Endothelial cell of umbilical vein (primary cell): ENCODE measurements at regions of chr17 and their contacts with region 1.

Region 1: GRCh38 chr17:39653662-39654331 is 11.4 kb upstream of the TCAP start:
- DNase-seq: peak; percentile 35
- H3K4me3 ChIP-seq: no peak overlapping the region
- H3K27ac ChIP-seq: no peak overlapping the region
- H3K4me1 ChIP-seq: peaks cover 1% of the 10 kb centered on the region
- H3K27me3 ChIP-seq: no peaks in the 10 kb centered on the region
- CTCF ChIP-seq: peak; percentile 93 to 96
- POLR2A ChIP-seq: no peak

Region 2: GRCh38 chr17:39612291-39612894 is 41.4 kb before region 1 on chr17:
- CTCF ChIA-PET with region 1: no interaction called
- POLR2A ChIA-PET with region 1: no interaction called
- dilution Hi-C with region 1: no loop called
- intact Hi-C with region 1: no loop called
- DNase-seq: no peak
- H3K4me3 ChIP-seq: no peak overlapping the region
- H3K27ac ChIP-seq: no peak overlapping the region
- H3K4me1 ChIP-seq: peaks cover 3% of the 10 kb centered on the region
- H3K27me3 ChIP-seq: peaks cover 24 to 29% of the 10 kb centered on the region in 2 experiments
- CTCF ChIP-seq: no peak
- POLR2A ChIP-seq: no peak

Region 3: DNA sequence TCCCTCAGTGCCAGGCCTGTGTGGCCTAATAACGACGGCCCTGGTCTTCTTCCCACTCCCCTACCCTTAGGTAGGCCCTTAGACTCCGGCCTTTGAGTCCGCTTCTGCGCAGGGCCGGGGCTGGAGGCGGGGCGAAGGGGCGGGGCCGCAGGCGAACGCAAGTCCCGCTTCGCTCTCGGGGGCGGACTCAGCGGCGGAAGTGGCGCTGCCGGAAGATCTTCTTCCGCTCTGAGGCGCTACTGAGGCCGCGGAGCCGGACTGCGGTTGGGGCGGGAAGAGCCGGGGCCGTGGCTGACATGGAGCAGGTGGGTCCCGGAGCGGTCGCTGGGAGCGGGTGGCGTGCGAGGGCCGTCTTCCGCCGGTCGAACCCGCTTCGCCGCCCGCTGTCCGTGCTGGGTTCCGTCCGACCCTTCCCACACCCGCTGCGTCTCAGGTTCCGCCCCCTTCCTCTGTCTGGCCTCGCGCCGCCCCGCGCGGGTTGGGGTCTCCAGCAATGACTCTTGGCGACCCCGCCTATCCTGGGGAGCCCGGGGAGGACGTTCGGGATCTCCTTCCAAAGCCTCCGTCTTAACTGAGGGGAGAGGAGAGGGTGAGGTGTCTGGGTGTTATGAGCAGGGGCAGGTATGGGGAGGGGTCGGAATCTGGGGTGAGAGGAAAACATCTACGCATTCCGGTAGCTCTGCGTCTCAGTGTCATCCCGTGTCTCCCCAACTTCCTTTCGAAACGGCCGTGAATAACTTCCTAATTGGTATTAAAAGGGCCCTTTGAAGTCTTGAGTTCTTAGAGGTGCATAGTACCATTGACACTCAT is 16.7 kb before region 1 on chr17 and contains the start of gene STARD3:
- CTCF ChIA-PET with region 1: interaction called, 63 read pairs
- POLR2A ChIA-PET with region 1: no interaction called
- dilution Hi-C with region 1: no loop called
- intact Hi-C with region 1: loop called (anchors 1 kb)
- DNase-seq: peak; percentile 88
- H3K4me3 ChIP-seq: peak within 1 kb of the TSS; percentile 90 to 96 (median 91)
- H3K27ac ChIP-seq: peak within 1 kb of the TSS; percentile 75
- H3K4me1 ChIP-seq: peaks cover 14% of the 10 kb centered on the region
- H3K27me3 ChIP-seq: peaks cover 0 to 3% of the 10 kb centered on the region in 2 experiments
- CTCF ChIP-seq: peak in 1 of 2 donors; percentile 5
- POLR2A ChIP-seq: peak; percentile 61
- total RNA-seq, gene STARD3: 48.9 and 51.0 TPM in 2 replicates

Region 4: DNA sequence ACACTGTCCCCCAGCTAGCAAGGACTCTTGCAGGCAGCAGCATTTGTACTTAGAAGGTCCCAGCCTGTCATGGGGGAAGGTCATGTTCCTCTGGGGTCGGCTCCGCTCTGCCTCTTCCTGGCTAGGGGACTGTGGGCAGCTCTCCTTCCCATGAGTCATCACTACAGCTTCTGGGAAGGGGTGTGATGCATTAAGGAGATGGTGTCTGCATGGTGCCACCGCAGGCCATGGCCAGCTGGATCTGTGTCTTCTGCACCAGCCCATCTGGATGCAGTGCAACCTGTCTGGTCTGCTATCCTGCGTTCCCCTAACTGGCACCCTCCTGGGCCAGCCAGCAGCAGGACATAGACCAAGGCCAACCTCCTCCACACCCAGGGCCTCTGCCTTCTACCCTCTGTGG is 10.5 kb before region 1 on chr17:
- CTCF ChIA-PET with region 1: interaction called, 48 read pairs
- POLR2A ChIA-PET with region 1: no interaction called
- dilution Hi-C with region 1: no loop called
- intact Hi-C with region 1: no loop called
- DNase-seq: peak; percentile 28
- H3K4me3 ChIP-seq: no peak overlapping the region
- H3K27ac ChIP-seq: no peak overlapping the region
- H3K4me1 ChIP-seq: peaks cover 11% of the 10 kb centered on the region
- H3K27me3 ChIP-seq: no peaks in the 10 kb centered on the region
- CTCF ChIP-seq: no peak
- POLR2A ChIP-seq: no peak

Region 5: GRCh38 chr17:39668199-39668966 is 14.6 kb after region 1 on chr17 and contains the start of gene PNMT:
- CTCF ChIA-PET with region 1: interaction called, 72 read pairs
- POLR2A ChIA-PET with region 1: no interaction called
- dilution Hi-C with region 1: no loop called
- intact Hi-C with region 1: no loop called
- DNase-seq: peak; percentile 48
- H3K4me3 ChIP-seq: peak within 1 kb of the TSS in 1 of 3 experiments; percentile 3
- H3K27ac ChIP-seq: no peak within 1 kb of the TSS
- H3K4me1 ChIP-seq: no peaks in the 10 kb centered on the region
- H3K27me3 ChIP-seq: peaks cover 6 to 10% of the 10 kb centered on the region in 2 experiments
- CTCF ChIP-seq: peak; percentile 77 to 84
- POLR2A ChIP-seq: no peak
- total RNA-seq, gene PNMT: not detected in 2 replicates

Region 6: DNA sequence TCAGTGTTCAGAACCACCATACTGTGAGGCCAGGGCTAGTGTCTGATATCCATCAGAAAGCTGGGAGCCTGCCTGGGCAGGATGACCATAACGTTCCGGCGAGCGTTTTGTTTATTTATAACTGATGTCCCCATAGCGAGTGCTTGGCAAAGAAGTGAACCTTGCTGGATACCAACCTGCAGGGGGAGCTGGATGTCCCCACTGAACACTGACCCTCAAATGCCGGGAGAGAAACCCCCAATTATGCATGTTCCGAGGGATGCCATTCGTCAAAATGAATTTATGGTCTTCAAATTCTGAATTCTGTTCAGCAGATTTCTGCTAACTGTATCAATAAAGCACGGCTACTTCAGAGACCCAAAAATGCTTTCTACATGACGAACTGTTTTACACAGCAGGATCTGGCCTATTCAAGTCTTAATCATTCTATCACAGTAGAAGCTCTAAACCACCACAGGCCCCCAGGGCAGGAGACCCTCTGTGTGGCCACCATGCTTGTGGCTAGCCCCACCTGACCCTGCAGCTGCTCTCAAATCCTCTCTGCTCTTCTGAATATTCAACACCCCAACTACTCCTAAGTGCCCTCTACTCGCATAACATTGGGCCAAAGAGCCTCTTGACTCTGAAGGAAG is 385.2 kb after region 1 on chr17:
- CTCF ChIA-PET with region 1: no interaction called
- POLR2A ChIA-PET with region 1: no interaction called
- dilution Hi-C with region 1: no loop called
- intact Hi-C with region 1: no loop called
- DNase-seq: peak; percentile 84
- H3K4me3 ChIP-seq: no peak overlapping the region
- H3K27ac ChIP-seq: peak overlapping the region; percentile 27
- H3K4me1 ChIP-seq: peaks cover 5% of the 10 kb centered on the region
- H3K27me3 ChIP-seq: no peaks in the 10 kb centered on the region
- CTCF ChIP-seq: peak; percentile 74 to 85
- POLR2A ChIP-seq: peak; percentile 28